H1 (cell line): ENCODE measurements at regions of chr20 and their contacts with region 1.

Region 1: GRCh38 chr20:35934050-35934449 is 20.3 kb downstream of the SCAND1 start:
- DNase-seq: peak in 1 of 2 experiments; percentile 29
- H3K4me3 ChIP-seq: peak overlapping the region in 1 of 4 experiments; percentile 27; a peak in 1 of 8 replicates
- H3K27ac ChIP-seq: peak overlapping the region; percentile 30
- H3K4me1 ChIP-seq: peaks cover 6 to 12% (median 10%) of the 10 kb centered on the region in 4 experiments; a peak in 5 of 7 replicates
- H3K27me3 ChIP-seq: no peaks in the 10 kb centered on the region; a peak in 1 of 7 replicates
- CTCF ChIP-seq: no peak
- EP300 ChIP-seq: no peak
- POLR2A ChIP-seq: peak in 1 of 2 experiments; percentile 25; a peak in 1 of 3 replicates
- RAD21 ChIP-seq: no peak

Region 2: GRCh38 chr20:35947489-35947888 is 13.4 kb after region 1 on chr20:
- CTCF ChIA-PET with region 1: interaction called, 6 read pairs
- POLR2A ChIA-PET with region 1: interaction called, 16 read pairs
- DNase-seq: peak; percentile 58 to 60
- H3K4me3 ChIP-seq: no peak overlapping the region
- H3K27ac ChIP-seq: 0 out of 2 replicates have a peak overlapping the region, but pooled peaks have one; percentile 12
- H3K4me1 ChIP-seq: peaks cover 0 to 4% (median 2%) of the 10 kb centered on the region in 4 experiments; a peak in 4 of 7 replicates
- H3K27me3 ChIP-seq: no peaks in the 10 kb centered on the region
- CTCF ChIP-seq: peak; percentile 78 to 92 (median 78)
- EP300 ChIP-seq: no peak
- POLR2A ChIP-seq: no peak
- RAD21 ChIP-seq: peak; percentile 63 to 73

Region 3: GRCh38 chr20:35988910-35989463 is 54.9 kb after region 1 on chr20:
- CTCF ChIA-PET with region 1: no interaction called
- POLR2A ChIA-PET with region 1: no interaction called
- DNase-seq: no peak
- H3K4me3 ChIP-seq: no peak overlapping the region
- H3K27ac ChIP-seq: no peak overlapping the region
- H3K4me1 ChIP-seq: no peaks in the 10 kb centered on the region; a peak in 1 of 7 replicates
- H3K27me3 ChIP-seq: no peaks in the 10 kb centered on the region
- CTCF ChIP-seq: no peak
- EP300 ChIP-seq: no peak
- POLR2A ChIP-seq: no peak
- RAD21 ChIP-seq: no peak